GM12878 (cell line): ENCODE measurements at regions of chr10 and their contacts with region 1.

Region 1: DNA sequence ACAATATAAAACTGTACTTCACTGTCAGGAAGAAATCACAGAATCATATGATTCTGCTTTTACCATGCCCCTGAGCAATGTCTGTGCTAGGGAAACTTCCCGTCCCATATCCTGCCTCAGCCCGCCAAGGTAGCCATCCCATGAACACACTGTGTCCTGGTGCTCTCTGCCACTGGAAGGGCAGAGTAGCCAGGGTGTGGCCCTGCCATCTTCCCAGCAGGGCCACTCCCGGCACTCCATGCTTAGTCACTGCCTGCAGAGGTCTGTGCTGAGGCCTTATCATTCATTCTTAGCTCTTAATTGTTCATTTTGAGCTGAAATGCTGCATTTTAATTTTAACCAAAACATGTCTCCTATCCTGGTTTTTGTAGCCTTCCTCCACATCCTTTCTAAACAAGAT is 31.8 kb downstream of the AP3M1 start:
- DNase-seq: no peak
- ATAC-seq: no peak
- H3K4me3 ChIP-seq: no peak overlapping the region
- H3K27ac ChIP-seq: no peak overlapping the region
- H3K4me1 ChIP-seq: peaks cover 10% of the 10 kb centered on the region
- H3K27me3 ChIP-seq: no peaks in the 10 kb centered on the region
- CTCF ChIP-seq: no peak
- EP300 ChIP-seq: no peak
- POLR2A ChIP-seq: no peak
- RAD21 ChIP-seq: no peak

Region 2: GRCh38 chr10:74103560-74104248 is 15.1 kb before region 1 on chr10:
- CTCF ChIA-PET with region 1: interaction called, 5 read pairs
- POLR2A ChIA-PET with region 1: interaction called, 3 read pairs
- RAD21 ChIA-PET with region 1: interaction called, 5 read pairs
- SMC1A ChIA-PET with region 1: interaction called, 23 read pairs
- in situ Hi-C with region 1: no loop called
- intact Hi-C with region 1: no loop called
- DNase-seq: no peak
- ATAC-seq: peak; percentile 85
- H3K4me3 ChIP-seq: no peak overlapping the region
- H3K27ac ChIP-seq: no peak overlapping the region
- H3K4me1 ChIP-seq: no peaks in the 10 kb centered on the region
- H3K27me3 ChIP-seq: no peaks in the 10 kb centered on the region
- CTCF ChIP-seq: peak; percentile 52 to 71 (median 67)
- EP300 ChIP-seq: no peak
- POLR2A ChIP-seq: no peak
- RAD21 ChIP-seq: peak; percentile 84

Region 3: GRCh38 chr10:74137992-74138391 is 19.2 kb after region 1 on chr10:
- CTCF ChIA-PET with region 1: interaction called, 18 read pairs
- POLR2A ChIA-PET with region 1: interaction called, 4 read pairs
- RAD21 ChIA-PET with region 1: no interaction called
- SMC1A ChIA-PET with region 1: interaction called, 5 read pairs
- in situ Hi-C with region 1: no loop called
- intact Hi-C with region 1: no loop called
- DNase-seq: no peak
- ATAC-seq: no peak
- H3K4me3 ChIP-seq: no peak overlapping the region
- H3K27ac ChIP-seq: no peak overlapping the region
- H3K4me1 ChIP-seq: no peaks in the 10 kb centered on the region
- H3K27me3 ChIP-seq: no peaks in the 10 kb centered on the region
- CTCF ChIP-seq: no peak
- EP300 ChIP-seq: no peak
- POLR2A ChIP-seq: no peak
- RAD21 ChIP-seq: no peak

Region 4: GRCh38 chr10:74234569-74234968 is 115.8 kb after region 1 on chr10:
- CTCF ChIA-PET with region 1: interaction called, 26 read pairs
- POLR2A ChIA-PET with region 1: no interaction called
- RAD21 ChIA-PET with region 1: interaction called, 4 read pairs
- SMC1A ChIA-PET with region 1: interaction called, 12 read pairs
- in situ Hi-C with region 1: no loop called
- intact Hi-C with region 1: loop called (anchors 5 kb)
- DNase-seq: no peak
- ATAC-seq: no peak; the same call in 2 of the 3 replicates
- H3K4me3 ChIP-seq: no peak overlapping the region
- H3K27ac ChIP-seq: no peak overlapping the region
- H3K4me1 ChIP-seq: no peaks in the 10 kb centered on the region
- H3K27me3 ChIP-seq: no peaks in the 10 kb centered on the region
- CTCF ChIP-seq: peak in 2 of 3 experiments; percentile 35 to 43; a peak in 2 of 6 replicates
- EP300 ChIP-seq: no peak
- POLR2A ChIP-seq: no peak
- RAD21 ChIP-seq: peak; percentile 39